ENCODE measurements at regions of chr2 and their contacts with region 1.

Region 1: GRCh38 chr2:45000921-45001868 is 8.1 kb downstream of the SIX2 start:
- DNase-seq: peak; percentile 49
- ATAC-seq: peak; percentile 12
- H3K4me3 Mint-ChIP-seq: peak overlapping the region; percentile 69
- H3K27ac Mint-ChIP-seq: no peak overlapping the region
- H3K4me1 Mint-ChIP-seq: peaks cover 36% of the 10 kb centered on the region
- H3K27me3 Mint-ChIP-seq: peaks cover 100% of the 10 kb centered on the region
- CTCF ChIP-seq: no peak

Region 2: DNA sequence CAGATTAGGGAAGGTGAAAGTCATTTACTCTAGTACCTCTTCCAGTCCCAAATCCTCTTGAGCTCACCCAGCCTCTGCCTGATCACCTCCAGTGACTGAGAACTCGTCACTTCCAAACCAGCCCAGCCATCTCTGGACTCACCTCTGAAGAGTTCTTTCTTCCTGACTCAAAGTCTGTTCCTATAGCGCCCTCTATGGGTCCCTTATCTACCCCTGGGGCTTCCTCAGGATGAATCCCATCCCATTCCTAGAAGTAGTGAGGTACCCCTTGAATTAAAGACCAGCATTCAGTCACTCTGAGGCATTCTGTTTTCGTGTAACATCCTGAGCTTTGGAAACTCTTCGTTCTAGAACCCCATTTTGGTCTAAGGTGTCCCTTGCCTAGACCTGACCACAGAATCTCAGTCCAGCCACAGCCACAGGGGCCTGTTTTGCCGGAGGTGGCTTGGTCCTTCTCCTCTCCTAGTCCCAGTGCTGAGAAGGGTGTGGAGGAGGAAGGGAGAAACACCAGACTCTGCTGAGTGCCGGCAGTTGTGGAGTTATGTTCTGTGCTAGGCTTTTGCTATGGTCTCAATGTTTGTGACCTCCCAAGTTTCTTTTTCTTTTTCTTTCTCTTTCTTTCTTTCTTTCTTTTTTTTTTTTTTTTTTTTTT is 27.0 kb before region 1 on chr2:
- CTCF ChIA-PET with region 1: interaction called, 18 read pairs
- POLR2A ChIA-PET with region 1: no interaction called
- DNase-seq: peak; percentile 71
- ATAC-seq: peak; percentile 78
- H3K4me3 Mint-ChIP-seq: no peak overlapping the region
- H3K27ac Mint-ChIP-seq: no peak overlapping the region
- H3K4me1 Mint-ChIP-seq: peaks cover 32% of the 10 kb centered on the region
- H3K27me3 Mint-ChIP-seq: peaks cover 6% of the 10 kb centered on the region; the same call in 1 of the 2 replicates
- CTCF ChIP-seq: peak; percentile 64